CD4-positive, alpha-beta memory T cell (primary cell): ENCODE measurements at regions of chr4 and their contacts with region 1.

Region 1: DNA sequence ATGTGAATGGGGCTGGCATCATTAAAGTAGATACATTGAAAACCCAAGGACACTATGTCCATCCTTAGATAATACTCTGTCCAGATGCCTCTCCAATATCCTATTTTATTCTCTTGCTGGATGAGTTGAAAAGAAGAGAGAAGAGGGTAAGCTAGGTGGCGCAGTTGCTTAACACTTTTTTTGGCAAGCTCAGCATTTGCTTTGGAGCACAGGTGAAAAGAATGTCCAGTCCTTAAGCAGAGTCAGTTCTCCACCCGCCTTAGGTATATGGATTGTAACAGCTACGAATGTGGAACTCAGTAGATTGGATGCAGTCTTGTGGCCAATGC is 208.4 kb downstream of the NWD2 start:
- DNase-seq: peak in 4 of 5 donors; percentile 28 to 34 (median 28)
- H3K4me3 ChIP-seq: peak overlapping the region; percentile 13 to 41
- H3K4me3 Mint-ChIP-seq: peak overlapping the region; percentile 76 to 88 (median 79)
- H3K27ac ChIP-seq: no peak overlapping the region
- H3K27ac Mint-ChIP-seq: no peak overlapping the region
- H3K4me1 ChIP-seq: peaks cover 13% of the 10 kb centered on the region
- H3K4me1 Mint-ChIP-seq: peaks cover 4 to 16% (median 12%) of the 10 kb centered on the region in 4 donors
- H3K27me3 ChIP-seq: peaks cover 20% of the 10 kb centered on the region
- H3K27me3 Mint-ChIP-seq: peaks cover 32 to 36% of the 10 kb centered on the region in 2 donors

Region 2: GRCh38 chr4:37561803-37562207 is 108.9 kb after region 1 on chr4:
- CTCF ChIA-PET with region 1: interaction called, 36 read pairs
- POLR2A ChIA-PET with region 1: interaction called, 4 read pairs
- intact Hi-C with region 1: loop called (anchors 1 kb)
- DNase-seq: no peak
- H3K4me3 ChIP-seq: no peak overlapping the region
- H3K4me3 Mint-ChIP-seq: no peak overlapping the region
- H3K27ac ChIP-seq: no peak overlapping the region
- H3K27ac Mint-ChIP-seq: no peak overlapping the region
- H3K4me1 ChIP-seq: no peaks in the 10 kb centered on the region
- H3K4me1 Mint-ChIP-seq: no peaks in the 10 kb centered on the region
- H3K27me3 ChIP-seq: no peaks in the 10 kb centered on the region
- H3K27me3 Mint-ChIP-seq: peaks cover 0 to 2% of the 10 kb centered on the region in 2 donors

Region 3: GRCh38 chr4:37568481-37568880 is 115.6 kb after region 1 on chr4:
- CTCF ChIA-PET with region 1: interaction called, 36 read pairs
- POLR2A ChIA-PET with region 1: interaction called, 4 read pairs
- intact Hi-C with region 1: loop called (anchors 1 kb)
- DNase-seq: no peak
- H3K4me3 ChIP-seq: no peak overlapping the region
- H3K4me3 Mint-ChIP-seq: no peak overlapping the region
- H3K27ac ChIP-seq: no peak overlapping the region
- H3K27ac Mint-ChIP-seq: peak overlapping the region in 2 of 7 donors; percentile 26 to 31
- H3K4me1 ChIP-seq: no peaks in the 10 kb centered on the region
- H3K4me1 Mint-ChIP-seq: peaks cover 0 to 2% (median 0%) of the 10 kb centered on the region in 4 donors
- H3K27me3 ChIP-seq: no peaks in the 10 kb centered on the region
- H3K27me3 Mint-ChIP-seq: no peaks in the 10 kb centered on the region

Region 4: DNA sequence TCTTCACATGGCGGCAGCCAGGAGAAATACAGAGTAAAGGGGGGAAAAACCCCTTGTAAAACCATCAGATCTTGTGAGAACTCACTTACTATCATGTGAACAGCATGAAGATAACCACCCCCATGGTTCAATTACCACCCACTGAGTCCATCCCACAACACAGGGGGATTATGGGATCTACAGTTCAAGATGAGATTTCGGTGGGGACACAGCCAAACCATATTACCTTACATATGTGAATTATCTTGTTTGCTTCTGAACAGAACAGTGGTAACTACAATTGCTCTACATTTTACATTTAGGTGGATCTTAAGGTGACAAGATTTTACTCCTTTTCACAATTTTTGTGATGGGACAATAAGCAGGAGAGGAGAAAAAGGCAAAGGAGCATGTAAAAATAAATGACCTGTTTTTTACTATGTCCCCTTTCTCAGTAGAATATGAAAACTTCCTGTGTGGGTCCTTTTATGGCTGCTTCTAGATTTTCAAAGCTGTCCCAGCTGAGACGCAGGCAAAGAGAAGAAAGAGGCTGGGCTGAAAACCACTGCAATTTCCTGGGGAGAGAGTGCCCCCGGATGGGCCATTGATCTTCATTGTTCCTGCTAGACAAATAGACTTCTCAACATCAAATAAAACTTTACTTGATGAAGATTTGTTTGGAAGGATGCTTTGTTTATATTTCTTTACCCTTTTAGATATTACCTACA is 327.7 kb after region 1 on chr4:
- CTCF ChIA-PET with region 1: interaction called, 5 read pairs
- POLR2A ChIA-PET with region 1: no interaction called
- intact Hi-C with region 1: loop called (anchors 5 kb)
- DNase-seq: peak; percentile 61 to 79 (median 77)
- H3K4me3 ChIP-seq: no peak overlapping the region
- H3K4me3 Mint-ChIP-seq: peak overlapping the region in 6 of 8 donors; percentile 41 to 76 (median 48)
- H3K27ac ChIP-seq: no peak overlapping the region
- H3K27ac Mint-ChIP-seq: peak overlapping the region; percentile 76 to 97 (median 91)
- H3K4me1 ChIP-seq: peaks cover 20% of the 10 kb centered on the region
- H3K4me1 Mint-ChIP-seq: peaks cover 15 to 27% (median 20%) of the 10 kb centered on the region in 4 donors
- H3K27me3 ChIP-seq: no peaks in the 10 kb centered on the region
- H3K27me3 Mint-ChIP-seq: peaks cover 1% of the 10 kb centered on the region in 2 donors

Region 5: DNA sequence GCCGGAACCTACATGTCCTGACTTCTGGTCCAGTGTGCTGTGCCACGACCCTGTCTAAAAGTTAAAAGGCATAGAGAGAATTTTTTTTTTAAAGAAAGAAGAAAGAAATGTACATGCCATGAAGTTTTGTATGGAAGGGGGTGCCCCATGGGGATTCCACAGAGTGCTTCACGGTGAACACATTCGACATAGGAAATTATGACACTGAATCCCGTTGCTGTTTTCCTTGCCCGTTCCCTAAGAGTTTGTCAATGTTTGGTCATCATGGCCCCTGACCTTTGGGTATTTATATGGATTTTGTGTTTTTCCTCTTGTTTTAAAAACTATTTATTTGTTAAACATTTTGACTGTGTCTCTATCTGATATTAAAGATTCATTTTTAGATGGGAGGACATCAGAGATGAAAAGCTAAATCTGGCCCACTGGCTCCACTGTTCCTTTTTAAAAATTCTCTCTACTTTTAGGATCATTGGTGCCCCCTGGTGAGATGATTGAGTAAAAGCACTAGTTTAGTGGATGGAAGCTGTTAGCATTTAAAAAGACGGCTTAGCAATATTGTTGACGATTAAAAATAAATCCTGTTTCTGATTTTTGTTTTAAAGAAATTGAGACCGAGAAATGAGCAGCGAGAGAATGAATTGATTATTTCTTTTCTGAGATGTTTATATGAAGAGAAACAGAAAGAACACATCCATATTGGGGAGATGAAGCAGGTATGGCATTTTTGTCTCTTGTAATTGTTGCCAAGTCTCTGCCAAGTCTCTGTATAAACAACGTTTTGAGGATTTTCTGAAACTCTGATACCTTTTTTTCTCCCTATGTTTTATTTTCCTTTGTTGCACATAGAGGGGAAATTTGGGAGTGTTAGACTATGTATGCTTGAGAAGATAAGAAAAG is 582.3 kb after region 1 on chr4:
- CTCF ChIA-PET with region 1: no interaction called
- POLR2A ChIA-PET with region 1: no interaction called
- intact Hi-C with region 1: loop called (anchors 2 kb)
- DNase-seq: peak; percentile 46 to 60 (median 56)
- H3K4me3 ChIP-seq: no peak overlapping the region
- H3K4me3 Mint-ChIP-seq: no peak overlapping the region
- H3K27ac ChIP-seq: no peak overlapping the region
- H3K27ac Mint-ChIP-seq: peak overlapping the region in 1 of 7 donors; percentile 68
- H3K4me1 ChIP-seq: no peaks in the 10 kb centered on the region
- H3K4me1 Mint-ChIP-seq: peaks cover 0 to 3% (median 0%) of the 10 kb centered on the region in 4 donors
- H3K27me3 ChIP-seq: no peaks in the 10 kb centered on the region
- H3K27me3 Mint-ChIP-seq: no peaks in the 10 kb centered on the region